CD8-positive, alpha-beta T cell (primary cell): ENCODE measurements at regions of chr17 and their contacts with region 1.

Region 1: DNA sequence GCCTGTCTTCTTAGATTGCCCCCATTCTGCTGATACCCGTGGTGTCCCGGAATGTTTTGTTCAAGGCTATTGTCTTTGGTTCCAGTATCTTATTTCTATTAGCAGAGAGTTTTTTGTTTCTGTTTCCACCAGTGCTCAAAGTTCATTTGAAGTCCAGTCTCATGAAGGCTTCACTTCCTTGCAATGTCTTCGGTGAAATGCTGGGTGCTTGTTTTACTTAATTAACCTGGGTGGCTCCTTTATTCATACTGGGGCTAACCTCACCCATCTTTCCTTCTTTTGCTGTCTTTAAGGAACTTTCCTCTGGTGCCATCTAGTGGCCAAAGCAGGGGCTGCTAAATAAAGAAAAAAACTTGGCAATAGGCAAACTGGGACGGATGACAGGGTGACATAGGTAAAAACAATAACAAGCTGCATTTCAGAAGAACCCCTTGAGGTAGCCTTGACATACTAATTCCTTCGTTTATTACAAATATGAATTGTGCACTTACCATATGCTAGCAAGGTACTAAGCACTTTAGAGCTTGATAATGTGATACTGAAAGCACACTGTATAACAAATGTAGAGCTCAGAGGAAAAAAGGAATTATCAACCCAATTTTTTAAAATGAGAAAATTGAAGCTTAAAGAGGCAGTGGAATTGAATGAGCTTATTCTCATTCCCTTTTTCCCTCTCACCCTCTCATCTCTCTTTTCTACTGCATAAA is 2.8 kb upstream of the SMIM36 start:
- DNase-seq: peak; percentile 49 to 74 (median 69)
- ATAC-seq: peak; percentile 57
- H3K4me3 ChIP-seq: no peak overlapping the region
- H3K4me3 Mint-ChIP-seq: no peak overlapping the region
- H3K27ac ChIP-seq: no peak overlapping the region
- H3K27ac Mint-ChIP-seq: no peak overlapping the region
- H3K4me1 ChIP-seq: no peaks in the 10 kb centered on the region
- H3K4me1 Mint-ChIP-seq: no peaks in the 10 kb centered on the region
- H3K27me3 ChIP-seq: no peaks in the 10 kb centered on the region
- H3K27me3 Mint-ChIP-seq: peaks cover 12% of the 10 kb centered on the region
- CTCF ChIP-seq: peak; percentile 96

Region 2: GRCh38 chr17:55348749-55349354 is 165.2 kb before region 1 on chr17:
- CTCF ChIA-PET with region 1: interaction called, 4 read pairs
- POLR2A ChIA-PET with region 1: no interaction called
- intact Hi-C with region 1: loop called in 1 of 2 experiments (anchors 5 kb)
- DNase-seq: peak in 8 of 9 experiments; percentile 1 to 61 (median 28)
- ATAC-seq: peak; percentile 54
- H3K4me3 ChIP-seq: no peak overlapping the region
- H3K4me3 Mint-ChIP-seq: no peak overlapping the region
- H3K27ac ChIP-seq: no peak overlapping the region
- H3K27ac Mint-ChIP-seq: no peak overlapping the region
- H3K4me1 ChIP-seq: peaks cover 8% of the 10 kb centered on the region
- H3K4me1 Mint-ChIP-seq: peaks cover 9% of the 10 kb centered on the region
- H3K27me3 ChIP-seq: no peaks in the 10 kb centered on the region
- H3K27me3 Mint-ChIP-seq: peaks cover 4% of the 10 kb centered on the region
- CTCF ChIP-seq: peak; percentile 84

Region 3: DNA sequence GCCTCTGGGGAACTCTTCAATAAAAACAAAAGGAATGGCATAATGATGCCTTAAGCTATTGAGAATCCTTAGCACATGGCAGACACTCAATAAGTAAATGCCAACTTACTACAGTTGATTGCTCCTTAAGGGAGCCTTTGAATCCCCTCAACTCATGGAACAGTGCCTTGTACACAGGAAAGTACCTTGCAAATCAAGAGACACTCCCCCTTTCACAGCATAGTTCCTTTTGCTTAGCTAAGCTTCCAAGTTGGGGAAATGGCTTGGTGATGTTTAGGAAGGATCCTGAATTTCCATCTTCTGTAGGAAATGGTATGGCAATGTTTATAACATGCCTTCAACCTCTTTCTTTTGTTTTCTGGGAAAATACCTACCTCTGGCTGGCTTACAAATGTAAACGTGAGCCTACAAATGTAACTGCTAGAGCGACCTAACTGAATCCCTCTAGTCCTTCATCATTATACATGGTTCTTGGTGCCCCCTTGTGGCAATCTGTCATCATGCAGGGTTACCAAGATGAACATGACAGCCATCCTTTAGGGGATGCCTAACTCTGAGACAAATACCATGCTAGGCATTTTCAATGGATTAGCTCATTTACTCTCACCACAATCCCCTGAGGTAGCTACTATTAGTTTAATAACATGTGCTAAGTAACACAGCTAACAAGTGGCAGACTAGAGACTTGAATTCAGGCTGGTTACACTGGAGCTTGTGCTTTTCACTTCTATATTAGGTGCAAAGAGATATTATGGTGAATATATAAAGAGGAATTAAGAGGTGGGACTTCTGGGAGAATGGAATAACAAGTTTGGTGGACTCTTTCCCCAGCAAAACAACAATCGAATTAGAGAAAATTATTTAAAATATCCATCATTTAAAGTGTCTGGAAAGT is 157.4 kb before region 1 on chr17:
- CTCF ChIA-PET with region 1: interaction called, 4 read pairs
- POLR2A ChIA-PET with region 1: no interaction called
- intact Hi-C with region 1: loop called in 1 of 2 experiments (anchors 5 kb)
- DNase-seq: peak; percentile 27 to 72 (median 63)
- ATAC-seq: peak; percentile 71
- H3K4me3 ChIP-seq: no peak overlapping the region
- H3K4me3 Mint-ChIP-seq: no peak overlapping the region
- H3K27ac ChIP-seq: no peak overlapping the region
- H3K27ac Mint-ChIP-seq: no peak overlapping the region
- H3K4me1 ChIP-seq: no peaks in the 10 kb centered on the region
- H3K4me1 Mint-ChIP-seq: no peaks in the 10 kb centered on the region
- H3K27me3 ChIP-seq: no peaks in the 10 kb centered on the region
- H3K27me3 Mint-ChIP-seq: peaks cover 9% of the 10 kb centered on the region
- CTCF ChIP-seq: peak; percentile 76

Region 4: DNA sequence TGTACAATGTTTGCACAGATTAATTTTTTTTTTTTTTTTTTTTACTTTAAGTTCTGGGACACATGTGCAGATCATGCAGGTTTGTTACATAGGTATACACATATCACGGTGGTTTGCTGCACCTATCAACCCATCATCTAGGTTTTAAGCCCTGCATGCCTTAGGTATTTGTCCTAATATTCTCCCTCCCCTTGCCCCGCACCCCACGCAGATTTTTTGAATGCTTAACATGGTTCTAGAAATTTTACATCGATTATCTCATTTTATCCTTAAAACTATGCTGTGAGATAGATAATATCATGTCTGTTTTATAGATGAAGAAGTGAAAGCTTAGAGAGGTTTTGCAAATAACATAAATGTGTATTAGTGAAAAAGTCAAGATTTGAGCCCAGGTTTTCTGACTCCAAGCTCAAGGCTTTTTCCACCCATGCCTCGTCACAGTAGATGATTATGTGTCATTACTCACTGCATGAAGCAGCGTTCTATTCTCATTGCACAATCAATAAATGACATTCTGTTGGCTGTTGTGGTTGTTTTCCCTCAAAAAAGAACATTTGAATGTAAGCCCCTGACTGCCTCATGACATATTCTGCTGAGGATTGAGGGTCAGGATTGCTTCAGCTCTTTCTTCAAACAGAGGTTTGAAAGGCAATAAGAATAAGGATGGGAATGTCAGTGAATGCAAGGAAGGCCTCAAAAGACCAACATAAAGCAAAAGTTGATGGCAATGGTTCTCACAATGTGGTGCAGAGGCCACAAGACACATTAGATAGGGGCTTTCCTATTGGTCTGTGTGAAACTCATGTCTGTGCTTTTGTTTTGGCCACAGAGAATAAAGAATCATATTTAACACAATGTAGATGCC is 87.3 kb before region 1 on chr17:
- CTCF ChIA-PET with region 1: no interaction called
- POLR2A ChIA-PET with region 1: no interaction called
- intact Hi-C with region 1: no loop called
- DNase-seq: no peak
- ATAC-seq: no peak
- H3K4me3 ChIP-seq: no peak overlapping the region
- H3K4me3 Mint-ChIP-seq: no peak overlapping the region
- H3K27ac ChIP-seq: no peak overlapping the region
- H3K27ac Mint-ChIP-seq: no peak overlapping the region
- H3K4me1 ChIP-seq: peaks cover 4% of the 10 kb centered on the region
- H3K4me1 Mint-ChIP-seq: peaks cover 4% of the 10 kb centered on the region
- H3K27me3 ChIP-seq: peaks cover 0 to 4% of the 10 kb centered on the region in 2 experiments
- H3K27me3 Mint-ChIP-seq: peaks cover 24% of the 10 kb centered on the region
- CTCF ChIP-seq: no peak

Region 5: GRCh38 chr17:55576996-55577586 is 63.1 kb after region 1 on chr17:
- CTCF ChIA-PET with region 1: no interaction called
- POLR2A ChIA-PET with region 1: no interaction called
- intact Hi-C with region 1: no loop called
- DNase-seq: peak in 4 of 9 experiments; percentile 10 to 33 (median 24)
- ATAC-seq: peak; percentile 42
- H3K4me3 ChIP-seq: peak overlapping the region; percentile 27 to 49
- H3K4me3 Mint-ChIP-seq: no peak overlapping the region
- H3K27ac ChIP-seq: peak overlapping the region in 1 of 2 experiments; percentile 43
- H3K27ac Mint-ChIP-seq: no peak overlapping the region
- H3K4me1 ChIP-seq: peaks cover 15% of the 10 kb centered on the region
- H3K4me1 Mint-ChIP-seq: no peaks in the 10 kb centered on the region
- H3K27me3 ChIP-seq: peaks cover 0 to 2% of the 10 kb centered on the region in 2 experiments
- H3K27me3 Mint-ChIP-seq: peaks cover 2% of the 10 kb centered on the region
- CTCF ChIP-seq: no peak